H1 (cell line): ENCODE measurements at regions of chr3 and their contacts with region 1.

Region 1: DNA sequence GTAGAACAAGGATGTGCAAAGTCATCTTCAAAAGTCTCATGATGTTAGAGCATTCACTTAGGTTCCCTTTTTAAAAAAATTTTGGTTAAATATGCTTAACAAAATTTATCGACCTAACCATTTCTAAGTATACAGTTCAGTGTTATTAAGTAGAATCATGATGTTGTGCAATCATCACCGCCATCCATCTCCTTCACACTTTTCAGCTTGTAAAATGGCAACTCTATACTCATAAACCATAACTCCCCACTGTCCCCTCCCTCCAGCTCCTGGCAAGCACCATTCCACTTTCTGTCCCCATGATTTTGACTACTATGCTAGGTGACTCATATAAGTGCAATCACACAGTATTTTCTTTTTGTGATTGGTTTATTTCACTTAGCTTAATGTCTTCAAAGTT is 895.0 kb downstream of the TBL1XR1 start:
- DNase-seq: no peak
- H3K4me3 ChIP-seq: no peak overlapping the region
- H3K27ac ChIP-seq: no peak overlapping the region
- H3K4me1 ChIP-seq: 0 out of 7 replicates have a peak, but pooled peaks cover 0 to 2% (median 0%) of the 10 kb centered on the region in 4 experiments
- H3K27me3 ChIP-seq: no peaks in the 10 kb centered on the region
- CTCF ChIP-seq: no peak
- EP300 ChIP-seq: no peak
- POLR2A ChIP-seq: peak; percentile 59 to 60
- RAD21 ChIP-seq: no peak

Region 2: DNA sequence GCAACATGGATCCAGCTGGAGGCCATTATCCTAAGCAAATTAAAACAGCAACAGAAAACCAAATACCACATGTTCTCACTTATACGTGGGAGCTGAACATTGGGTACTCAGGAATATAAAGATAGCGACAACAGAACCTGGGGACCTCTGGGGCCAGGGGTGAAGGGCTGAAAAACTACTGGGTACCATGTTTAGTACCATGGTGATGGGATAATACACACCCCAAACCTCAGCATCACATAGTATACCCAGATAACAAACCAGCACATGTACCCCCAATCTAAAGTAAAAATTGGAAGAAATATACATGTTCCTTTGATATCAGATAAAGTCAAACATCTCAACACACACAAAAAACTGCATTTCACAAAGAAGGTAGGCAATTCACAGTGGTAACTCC is 18.8 kb after region 1 on chr3:
- CTCF ChIA-PET with region 1: no interaction called
- POLR2A ChIA-PET with region 1: interaction called, 29 read pairs
- DNase-seq: no peak
- H3K4me3 ChIP-seq: peak overlapping the region; percentile 37 to 67 (median 47)
- H3K27ac ChIP-seq: peak overlapping the region; percentile 49; the same call in 1 of the 2 replicates
- H3K4me1 ChIP-seq: peaks cover 0 to 11% (median under 1%) of the 10 kb centered on the region in 4 experiments; a peak in 3 of 7 replicates
- H3K27me3 ChIP-seq: no peaks in the 10 kb centered on the region
- CTCF ChIP-seq: no peak
- EP300 ChIP-seq: no peak
- POLR2A ChIP-seq: no peak
- RAD21 ChIP-seq: no peak

Region 3: GRCh38 chr3:176352716-176353334 is 50.6 kb after region 1 on chr3:
- CTCF ChIA-PET with region 1: no interaction called
- POLR2A ChIA-PET with region 1: no interaction called
- DNase-seq: no peak
- H3K4me3 ChIP-seq: no peak overlapping the region
- H3K27ac ChIP-seq: no peak overlapping the region
- H3K4me1 ChIP-seq: no peaks in the 10 kb centered on the region
- H3K27me3 ChIP-seq: no peaks in the 10 kb centered on the region
- CTCF ChIP-seq: no peak
- EP300 ChIP-seq: no peak
- POLR2A ChIP-seq: no peak
- RAD21 ChIP-seq: no peak